SK-N-SH (cell line): ENCODE measurements at regions of chr7 and their contacts with region 1.

Region 1: GRCh38 chr7:129468087-129468486 is 33.9 kb downstream of the STRIP2 start:
- DNase-seq: no peak
- H3K4me3 ChIP-seq: no peak overlapping the region
- H3K27ac ChIP-seq: no peak overlapping the region
- H3K4me1 ChIP-seq: peaks cover 0 to 23% of the 10 kb centered on the region in 2 experiments; a peak in 2 of 4 replicates
- H3K27me3 ChIP-seq: no peaks in the 10 kb centered on the region
- CTCF ChIP-seq: no peak
- EP300 ChIP-seq: no peak
- RAD21 ChIP-seq: no peak

Region 2: GRCh38 chr7:129381710-129382484 is 86.2 kb before region 1 on chr7:
- CTCF ChIA-PET with region 1: interaction called, 397 read pairs
- POLR2A ChIA-PET with region 1: no interaction called
- DNase-seq: no peak
- H3K4me3 ChIP-seq: no peak overlapping the region
- H3K27ac ChIP-seq: no peak overlapping the region
- H3K4me1 ChIP-seq: no peaks in the 10 kb centered on the region
- H3K27me3 ChIP-seq: no peaks in the 10 kb centered on the region
- CTCF ChIP-seq: no peak
- EP300 ChIP-seq: no peak
- RAD21 ChIP-seq: no peak

Region 3: DNA sequence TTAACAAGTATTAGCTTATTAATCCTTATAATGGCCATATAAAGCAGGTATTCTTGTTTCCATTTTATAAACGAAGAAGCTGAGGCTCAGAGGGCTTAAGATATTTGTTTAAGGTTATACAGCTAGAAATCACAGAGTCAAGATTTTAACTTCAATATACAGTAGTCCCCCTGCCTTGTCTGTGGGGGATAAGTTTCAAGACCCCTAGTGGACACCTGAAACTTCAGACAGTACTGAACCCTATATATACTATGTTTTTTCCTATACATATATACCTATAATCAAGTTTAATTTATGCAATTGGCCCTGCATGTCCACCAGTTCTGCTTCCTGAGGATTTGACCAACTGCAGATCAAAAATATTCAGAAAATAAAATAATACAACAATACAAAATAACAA is 78.3 kb before region 1 on chr7:
- CTCF ChIA-PET with region 1: interaction called, 25 read pairs
- POLR2A ChIA-PET with region 1: no interaction called
- DNase-seq: no peak
- H3K4me3 ChIP-seq: no peak overlapping the region
- H3K27ac ChIP-seq: no peak overlapping the region
- H3K4me1 ChIP-seq: no peaks in the 10 kb centered on the region; a peak in 1 of 4 replicates
- H3K27me3 ChIP-seq: no peaks in the 10 kb centered on the region
- CTCF ChIP-seq: no peak; the same call in none of the 2 replicates
- EP300 ChIP-seq: no peak
- RAD21 ChIP-seq: no peak

Region 4: DNA sequence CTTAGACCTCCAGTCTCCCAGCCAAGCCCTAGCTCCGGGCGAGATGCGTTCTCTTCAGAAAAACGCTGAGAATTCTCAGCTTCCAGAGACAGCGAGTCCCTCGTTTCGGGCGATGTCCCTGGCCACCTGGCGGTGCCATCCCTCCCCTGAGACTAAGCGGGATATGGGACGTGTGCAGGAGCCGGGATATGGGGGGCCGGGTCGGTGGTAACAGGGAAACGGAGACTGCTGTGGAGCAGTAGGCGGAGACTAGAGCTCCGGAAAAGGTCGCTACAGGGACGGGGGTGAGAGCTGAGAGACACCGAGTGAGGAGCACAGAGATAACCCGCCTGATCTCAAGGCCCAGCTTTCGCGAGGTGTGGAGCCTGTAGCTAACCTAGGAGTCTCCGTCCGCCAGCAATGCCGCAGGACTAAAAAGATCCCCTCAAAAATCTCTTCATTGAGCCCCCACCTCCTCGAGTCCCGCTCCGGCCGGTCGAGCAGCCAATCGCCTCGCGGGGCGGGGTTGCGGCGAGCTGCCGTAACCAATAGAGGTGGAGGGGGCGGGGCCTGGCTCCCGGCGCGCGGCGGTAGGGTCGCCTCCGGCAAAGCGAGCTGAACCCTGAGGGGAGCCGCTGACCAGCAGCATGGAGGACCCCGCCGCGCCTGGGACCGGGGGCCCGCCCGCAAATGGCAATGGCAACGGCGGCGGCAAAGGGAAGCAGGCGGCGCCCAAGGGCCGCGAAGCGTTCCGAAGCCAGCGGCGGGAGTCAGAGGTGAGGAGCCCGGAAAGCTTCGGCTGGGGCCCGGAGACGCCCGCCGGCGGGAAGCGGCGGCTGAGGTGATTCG is 34.0 kb before region 1 on chr7 and contains the start of gene STRIP2:
- CTCF ChIA-PET with region 1: interaction called, 23 read pairs
- POLR2A ChIA-PET with region 1: interaction called, 4 read pairs
- DNase-seq: peak; percentile 97
- H3K4me3 ChIP-seq: peak within 1 kb of the TSS; percentile 85 to 93
- H3K27ac ChIP-seq: peak within 1 kb of the TSS; percentile 39 to 81; a peak in 3 of 4 replicates
- H3K4me1 ChIP-seq: peaks cover 7 to 15% of the 10 kb centered on the region in 2 experiments; a peak in 3 of 4 replicates
- H3K27me3 ChIP-seq: no peaks in the 10 kb centered on the region
- CTCF ChIP-seq: peak; percentile 44
- EP300 ChIP-seq: no peak; a peak in 1 of 4 replicates
- RAD21 ChIP-seq: peak; percentile 11; the same call in 1 of the 2 replicates
- polyA plus RNA-seq, gene STRIP2: 4.9 and 6.9 TPM in 2 replicates

Region 5: GRCh38 chr7:129480674-129481365 is 12.7 kb after region 1 on chr7:
- CTCF ChIA-PET with region 1: interaction called, 32 read pairs
- POLR2A ChIA-PET with region 1: no interaction called
- DNase-seq: no peak
- H3K4me3 ChIP-seq: no peak overlapping the region
- H3K27ac ChIP-seq: no peak overlapping the region
- H3K4me1 ChIP-seq: no peaks in the 10 kb centered on the region
- H3K27me3 ChIP-seq: no peaks in the 10 kb centered on the region
- CTCF ChIP-seq: no peak
- EP300 ChIP-seq: no peak
- RAD21 ChIP-seq: no peak